ENCODE measurements at regions of chr17 and their contacts with region 1.

Region 1: DNA sequence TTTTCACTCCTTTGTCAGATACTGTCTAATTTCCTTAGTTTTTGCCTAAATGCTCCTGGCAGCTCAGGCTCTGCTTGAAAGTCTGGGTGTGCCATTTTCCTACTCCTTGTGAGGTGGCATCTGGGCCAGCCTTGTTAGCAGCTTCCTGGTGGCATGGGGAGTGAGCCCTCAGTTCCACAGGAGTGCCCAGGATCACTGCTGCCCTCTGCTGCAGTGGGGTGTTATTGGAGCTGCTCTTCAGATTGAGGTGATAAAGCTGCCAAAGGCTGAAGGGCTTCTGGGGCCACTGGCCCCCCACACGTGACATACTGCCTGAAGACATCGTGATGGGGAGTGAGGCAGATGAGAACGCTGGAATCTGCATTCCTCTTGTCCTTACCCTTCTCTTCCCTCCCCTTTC is 27.4 kb downstream of the CEP95 start:
- DNase-seq: peak in 3 of 14 experiments; percentile 7 to 33 (median 13)
- ATAC-seq: no peak
- H3K4me3 ChIP-seq: no peak overlapping the region
- H3K4me3 Mint-ChIP-seq: no peak overlapping the region
- H3K27ac ChIP-seq: no peak overlapping the region
- H3K27ac Mint-ChIP-seq: peak overlapping the region; percentile 20
- H3K4me1 ChIP-seq: no peaks in the 10 kb centered on the region
- H3K4me1 Mint-ChIP-seq: no peaks in the 10 kb centered on the region
- H3K27me3 ChIP-seq: no peaks in the 10 kb centered on the region
- H3K27me3 Mint-ChIP-seq: no peaks in the 10 kb centered on the region
- CTCF ChIP-seq: no peak

Region 2: GRCh38 chr17:64564098-64564497 is 29.9 kb after region 1 on chr17:
- CTCF ChIA-PET with region 1: no interaction called
- POLR2A ChIA-PET with region 1: no interaction called
- intact Hi-C with region 1: loop called in 1 of 2 experiments (anchors 5 kb)
- DNase-seq: no peak
- ATAC-seq: no peak
- H3K4me3 ChIP-seq: no peak overlapping the region
- H3K4me3 Mint-ChIP-seq: no peak overlapping the region
- H3K27ac ChIP-seq: no peak overlapping the region
- H3K27ac Mint-ChIP-seq: peak overlapping the region; percentile 23
- H3K4me1 ChIP-seq: no peaks in the 10 kb centered on the region
- H3K4me1 Mint-ChIP-seq: no peaks in the 10 kb centered on the region
- H3K27me3 ChIP-seq: no peaks in the 10 kb centered on the region
- H3K27me3 Mint-ChIP-seq: no peaks in the 10 kb centered on the region
- CTCF ChIP-seq: no peak

Region 3: GRCh38 chr17:64648234-64648633 is 114.1 kb after region 1 on chr17:
- CTCF ChIA-PET with region 1: interaction called, 4 read pairs
- POLR2A ChIA-PET with region 1: no interaction called
- intact Hi-C with region 1: loop called in 1 of 2 experiments (anchors 10 kb)
- DNase-seq: no peak
- ATAC-seq: no peak
- H3K4me3 ChIP-seq: no peak overlapping the region
- H3K4me3 Mint-ChIP-seq: no peak overlapping the region
- H3K27ac ChIP-seq: no peak overlapping the region
- H3K27ac Mint-ChIP-seq: no peak overlapping the region
- H3K4me1 ChIP-seq: peaks cover 3% of the 10 kb centered on the region
- H3K4me1 Mint-ChIP-seq: peaks cover 59% of the 10 kb centered on the region
- H3K27me3 ChIP-seq: no peaks in the 10 kb centered on the region
- H3K27me3 Mint-ChIP-seq: no peaks in the 10 kb centered on the region
- CTCF ChIP-seq: no peak

Region 4: DNA sequence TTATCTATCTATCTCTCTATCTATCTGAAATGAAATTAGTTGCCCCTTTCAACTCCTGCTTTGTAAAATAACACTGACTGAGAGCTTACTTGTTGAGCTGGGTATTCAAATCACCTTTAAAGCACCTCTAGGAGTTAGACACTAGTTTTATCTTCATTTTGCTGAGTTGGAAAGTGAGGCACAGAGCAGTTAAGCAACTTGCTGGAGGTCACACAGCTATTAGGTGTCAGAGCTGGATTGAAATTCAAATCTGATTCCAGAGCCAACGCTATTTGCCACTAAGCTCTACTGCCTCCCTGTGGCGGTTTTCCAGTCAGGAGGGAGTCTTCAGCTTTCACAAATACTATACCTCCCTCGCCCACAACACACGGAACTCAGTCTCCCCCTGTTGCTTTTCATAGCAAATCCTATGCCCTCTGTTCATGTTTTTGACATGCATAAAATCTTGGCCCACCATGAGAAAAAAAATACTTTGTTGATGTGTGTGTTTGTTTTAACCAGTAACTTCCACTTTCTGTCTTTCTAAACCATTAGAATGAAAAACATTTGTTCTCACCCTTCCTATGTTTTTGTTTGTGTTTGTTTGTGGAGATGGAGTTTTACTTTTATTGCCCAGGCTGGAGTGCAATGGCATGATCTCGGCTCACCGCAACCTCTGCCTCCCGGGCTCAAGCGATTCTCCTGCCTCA is 202.8 kb after region 1 on chr17:
- CTCF ChIA-PET with region 1: no interaction called
- POLR2A ChIA-PET with region 1: no interaction called
- intact Hi-C with region 1: loop called in 1 of 2 experiments (anchors 10 kb)
- DNase-seq: peak; percentile 31 to 65 (median 48)
- ATAC-seq: peak; percentile 88
- H3K4me3 ChIP-seq: no peak overlapping the region
- H3K4me3 Mint-ChIP-seq: no peak overlapping the region
- H3K27ac ChIP-seq: no peak overlapping the region
- H3K27ac Mint-ChIP-seq: no peak overlapping the region
- H3K4me1 ChIP-seq: no peaks in the 10 kb centered on the region
- H3K4me1 Mint-ChIP-seq: peaks cover 12% of the 10 kb centered on the region
- H3K27me3 ChIP-seq: no peaks in the 10 kb centered on the region
- H3K27me3 Mint-ChIP-seq: no peaks in the 10 kb centered on the region
- CTCF ChIP-seq: peak; percentile 74

Measured in CD4-positive, alpha-beta T cell (primary cell).